ENCODE measurements at regions of chr7 and their contacts with region 1.

Region 1: DNA sequence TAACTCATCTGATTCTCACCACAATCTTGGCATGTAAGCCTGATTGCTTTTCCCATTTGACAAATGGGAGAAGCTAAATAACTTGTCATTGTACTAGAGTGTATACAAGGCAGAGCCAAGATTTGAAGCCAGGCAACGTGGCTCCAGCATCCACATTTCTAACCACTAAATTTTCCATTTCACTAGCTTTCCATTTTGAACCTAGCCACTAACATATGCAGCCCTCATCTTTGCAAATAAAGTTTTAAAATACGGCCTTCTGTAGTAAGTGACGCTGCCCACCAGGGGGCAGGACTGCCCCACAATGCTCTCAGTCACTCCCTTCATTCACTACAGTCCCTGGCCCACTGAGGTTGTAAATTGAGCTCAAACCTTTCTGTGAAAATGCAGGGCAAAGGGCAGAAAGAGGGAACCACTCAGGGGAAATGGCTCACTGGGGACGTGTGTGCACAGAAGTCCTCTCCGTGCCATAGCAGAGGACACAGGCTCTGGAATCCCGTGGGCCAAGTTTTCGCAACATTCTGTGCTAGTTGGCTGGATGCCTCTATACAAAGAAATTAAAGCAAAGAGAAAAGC is 315.7 kb downstream of the TNS3 start:
- DNase-seq: peak; percentile 68
- ATAC-seq: peak; percentile 97
- H3K4me3 ChIP-seq: no peak overlapping the region
- H3K27ac ChIP-seq: no peak overlapping the region
- H3K4me1 ChIP-seq: peaks cover 5% of the 10 kb centered on the region; the same call in 1 of the 2 replicates
- H3K27me3 ChIP-seq: no peaks in the 10 kb centered on the region
- CTCF ChIP-seq: peak; percentile 91
- POLR2A ChIP-seq: 0 out of 2 replicates have a peak, but pooled peaks have one; percentile 35
- RAD21 ChIP-seq: peak; percentile 94

Region 2: DNA sequence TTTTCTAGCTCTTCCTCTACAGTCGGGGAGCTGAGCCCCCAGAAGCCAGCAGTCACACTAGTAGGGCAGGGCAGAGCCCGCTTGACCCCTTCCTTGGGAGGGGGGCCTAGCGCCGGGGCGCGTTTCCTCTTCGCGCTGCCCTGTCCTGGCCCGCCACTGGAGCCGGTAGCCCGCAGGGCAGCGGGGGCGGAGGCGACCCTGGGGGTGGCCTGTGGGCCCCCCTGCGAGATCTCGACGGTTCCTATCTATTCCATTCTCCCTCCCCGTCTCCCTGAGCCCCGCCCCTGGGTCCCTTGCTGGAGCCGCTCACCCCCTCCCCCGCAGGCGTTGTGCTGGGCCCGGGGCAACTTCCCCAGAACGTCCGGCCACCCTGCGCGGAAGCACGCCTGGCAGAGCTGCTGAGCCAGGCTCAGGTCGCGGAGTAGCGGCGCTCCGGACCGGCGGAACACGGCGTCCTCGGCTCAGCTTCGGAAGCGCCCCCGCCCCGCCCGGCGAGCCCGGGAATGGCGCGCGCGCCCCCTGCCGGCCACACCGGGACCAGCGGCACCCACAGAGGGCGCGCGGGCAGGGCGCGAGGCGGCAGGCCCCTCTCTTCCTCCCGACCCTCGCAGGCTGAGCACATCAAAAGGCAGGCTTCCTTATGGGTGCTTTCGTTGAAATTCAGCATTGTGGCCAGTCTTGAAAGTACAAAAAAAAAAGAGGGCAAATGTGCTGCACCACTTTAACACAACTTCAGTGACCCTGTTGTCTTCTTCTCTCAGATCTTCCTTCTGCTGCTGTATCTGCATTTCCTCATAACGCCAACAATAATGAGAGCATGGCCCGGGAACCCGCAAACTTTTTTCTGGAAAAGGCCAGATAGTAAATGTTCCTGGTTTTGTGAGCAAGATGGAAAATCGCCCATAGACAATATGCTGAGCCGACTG is 11.9 kb before region 1 on chr7:
- CTCF ChIA-PET with region 1: interaction called, 13 read pairs
- POLR2A ChIA-PET with region 1: no interaction called
- dilution Hi-C with region 1: no loop called
- in situ Hi-C with region 1: no loop called
- intact Hi-C with region 1: no loop called
- DNase-seq: peak; percentile 35
- ATAC-seq: peak; percentile 90
- H3K4me3 ChIP-seq: peak overlapping the region; percentile 76
- H3K27ac ChIP-seq: peak overlapping the region; percentile 66
- H3K4me1 ChIP-seq: peaks cover 6% of the 10 kb centered on the region
- H3K27me3 ChIP-seq: no peaks in the 10 kb centered on the region
- CTCF ChIP-seq: peak; percentile 85
- POLR2A ChIP-seq: no peak
- RAD21 ChIP-seq: peak; percentile 65

Region 3: DNA sequence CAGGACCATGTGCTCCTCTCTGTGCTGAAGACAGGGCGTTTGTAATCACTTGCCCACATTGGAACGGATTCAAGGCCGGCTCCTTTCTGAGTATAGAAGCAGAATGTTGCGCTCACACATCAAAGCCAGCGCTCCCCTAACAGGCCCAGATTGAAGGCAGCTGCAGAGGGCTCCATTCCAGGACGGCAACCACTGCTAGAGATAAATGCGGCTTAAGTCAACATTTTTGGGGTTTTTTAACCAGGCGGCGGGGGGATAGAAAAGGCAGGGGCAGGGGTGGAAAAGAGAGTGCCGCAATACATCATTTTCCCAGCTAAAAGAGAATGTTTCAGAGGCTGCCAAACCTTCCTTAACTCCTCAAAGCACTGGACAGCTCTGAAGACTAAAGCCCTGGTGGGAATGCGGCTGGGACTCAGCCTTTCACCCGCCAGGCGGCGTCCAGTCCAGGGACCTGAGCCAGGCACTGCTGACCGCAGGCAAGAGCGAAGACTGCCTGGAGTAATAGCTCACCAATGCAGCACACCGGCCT is 126.1 kb after region 1 on chr7:
- CTCF ChIA-PET with region 1: interaction called, 7 read pairs
- POLR2A ChIA-PET with region 1: no interaction called
- dilution Hi-C with region 1: no loop called
- in situ Hi-C with region 1: no loop called
- intact Hi-C with region 1: loop called (anchors 5 kb)
- DNase-seq: peak; percentile 82
- ATAC-seq: peak; percentile 96
- H3K4me3 ChIP-seq: no peak overlapping the region
- H3K27ac ChIP-seq: no peak overlapping the region
- H3K4me1 ChIP-seq: peaks cover 6% of the 10 kb centered on the region; the same call in 1 of the 2 replicates
- H3K27me3 ChIP-seq: no peaks in the 10 kb centered on the region
- CTCF ChIP-seq: peak; percentile 62
- POLR2A ChIP-seq: no peak
- RAD21 ChIP-seq: peak; percentile 67

Region 4: GRCh38 chr7:47435889-47436312 is 169.7 kb after region 1 on chr7:
- CTCF ChIA-PET with region 1: interaction called, 3 read pairs
- POLR2A ChIA-PET with region 1: no interaction called
- dilution Hi-C with region 1: no loop called
- in situ Hi-C with region 1: no loop called
- intact Hi-C with region 1: loop called (anchors 1 kb)
- DNase-seq: peak; percentile 81
- ATAC-seq: peak; percentile 94
- H3K4me3 ChIP-seq: no peak overlapping the region
- H3K27ac ChIP-seq: no peak overlapping the region
- H3K4me1 ChIP-seq: 0 out of 2 replicates have a peak, but pooled peaks cover 2% of the 10 kb centered on the region
- H3K27me3 ChIP-seq: no peaks in the 10 kb centered on the region
- CTCF ChIP-seq: peak; percentile 65
- POLR2A ChIP-seq: no peak
- RAD21 ChIP-seq: peak; percentile 80

Region 5: GRCh38 chr7:47571331-47572093 is 305.3 kb after region 1 on chr7:
- CTCF ChIA-PET with region 1: no interaction called
- POLR2A ChIA-PET with region 1: no interaction called
- dilution Hi-C with region 1: no loop called
- in situ Hi-C with region 1: no loop called
- intact Hi-C with region 1: loop called (anchors 10 kb)
- DNase-seq: peak; percentile 95
- ATAC-seq: peak; percentile 66
- H3K4me3 ChIP-seq: no peak overlapping the region
- H3K27ac ChIP-seq: peak overlapping the region; percentile 25
- H3K4me1 ChIP-seq: peaks cover 41% of the 10 kb centered on the region
- H3K27me3 ChIP-seq: no peaks in the 10 kb centered on the region
- CTCF ChIP-seq: no peak
- POLR2A ChIP-seq: no peak; the same call in 1 of the 2 replicates
- RAD21 ChIP-seq: peak; percentile 2

Region 6: GRCh38 chr7:47945261-47946001 is 679.2 kb after region 1 on chr7:
- CTCF ChIA-PET with region 1: no interaction called
- POLR2A ChIA-PET with region 1: no interaction called
- dilution Hi-C with region 1: no loop called
- in situ Hi-C with region 1: loop called (anchors 10 kb)
- intact Hi-C with region 1: loop called (anchors 10 kb)
- DNase-seq: peak; percentile 62
- ATAC-seq: peak; percentile 22; the same call in 1 of the 2 replicates
- H3K4me3 ChIP-seq: no peak overlapping the region
- H3K27ac ChIP-seq: no peak overlapping the region
- H3K4me1 ChIP-seq: peaks cover 14% of the 10 kb centered on the region
- H3K27me3 ChIP-seq: no peaks in the 10 kb centered on the region
- CTCF ChIP-seq: peak; percentile 82
- POLR2A ChIP-seq: no peak
- RAD21 ChIP-seq: peak; percentile 72

Region 7: GRCh38 chr7:47968847-47969774 is 702.9 kb after region 1 on chr7:
- CTCF ChIA-PET with region 1: no interaction called
- POLR2A ChIA-PET with region 1: no interaction called
- dilution Hi-C with region 1: no loop called
- in situ Hi-C with region 1: no loop called
- intact Hi-C with region 1: loop called (anchors 2 kb)
- DNase-seq: peak; percentile 74
- ATAC-seq: peak; percentile 86
- H3K4me3 ChIP-seq: no peak overlapping the region
- H3K27ac ChIP-seq: no peak overlapping the region
- H3K4me1 ChIP-seq: peaks cover 7% of the 10 kb centered on the region; the same call in 1 of the 2 replicates
- H3K27me3 ChIP-seq: no peaks in the 10 kb centered on the region
- CTCF ChIP-seq: peak; percentile 83
- POLR2A ChIP-seq: no peak
- RAD21 ChIP-seq: peak; percentile 75

Measured in IMR-90 (cell line).